ENCODE measurements at regions of chr12 and their contacts with region 1.

Region 1: GRCh38 chr12:31603546-31604009 is 12.6 kb upstream of the DENND5B start:
- DNase-seq: no peak
- ATAC-seq: no peak
- H3K4me3 ChIP-seq: no peak overlapping the region
- H3K27ac ChIP-seq: no peak overlapping the region
- H3K4me1 ChIP-seq: peaks cover 0 to 6% of the 10 kb centered on the region in 2 donors
- H3K27me3 ChIP-seq: no peaks in the 10 kb centered on the region

Region 2: GRCh38 chr12:31578632-31579031 is 24.9 kb before region 1 on chr12:
- intact Hi-C with region 1: no loop called
- DNase-seq: no peak
- ATAC-seq: no peak
- H3K4me3 ChIP-seq: no peak overlapping the region
- H3K27ac ChIP-seq: no peak overlapping the region
- H3K4me1 ChIP-seq: peaks cover 0 to 6% of the 10 kb centered on the region in 2 donors
- H3K27me3 ChIP-seq: no peaks in the 10 kb centered on the region

Region 3: DNA sequence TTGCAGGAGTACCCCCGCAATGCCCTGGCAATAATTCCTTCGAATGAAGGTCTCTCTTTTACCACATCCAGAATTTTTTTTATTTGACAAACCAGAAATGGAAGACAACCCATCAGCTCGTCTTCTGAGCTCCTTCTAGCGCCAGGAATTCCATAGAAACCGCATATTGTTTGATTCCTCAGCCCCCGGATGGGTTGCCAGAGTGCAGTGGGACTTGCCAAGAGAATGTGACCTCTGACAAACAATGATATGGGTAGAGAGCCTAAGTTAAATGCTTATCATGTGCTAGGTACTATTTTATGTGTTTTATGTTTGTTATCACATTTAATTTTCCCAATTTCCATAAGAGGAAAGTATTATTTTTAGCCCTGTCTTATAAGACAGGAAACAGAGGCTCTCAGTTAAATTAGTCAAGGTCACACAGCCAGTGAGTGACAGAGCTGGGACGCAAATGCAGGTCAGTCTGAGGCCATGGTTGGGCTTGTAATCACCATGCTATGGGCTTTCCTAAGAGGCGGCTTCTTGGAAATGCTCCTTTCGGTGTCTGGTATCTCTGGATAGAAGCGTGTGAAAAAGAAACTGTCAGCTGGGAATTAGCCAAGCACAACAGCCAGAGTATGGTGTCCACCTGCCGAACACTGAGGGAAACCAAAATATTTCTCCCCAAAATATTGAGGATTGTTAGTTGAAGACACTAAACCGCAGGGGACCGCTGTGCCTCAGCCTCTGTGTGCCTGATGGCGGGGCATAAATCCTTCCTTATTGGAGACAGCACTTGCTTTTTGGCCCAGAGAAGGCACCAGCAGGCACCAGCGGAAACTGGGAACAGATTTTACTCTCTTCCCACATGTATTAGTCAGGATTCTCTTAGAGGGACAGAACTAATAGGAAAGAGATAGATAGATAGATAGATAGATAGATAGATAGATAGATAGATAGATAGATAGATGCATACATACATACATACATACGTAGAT is 26.5 kb after region 1 on chr12:
- intact Hi-C with region 1: loop called in 1 of 2 experiments (anchors 2 kb)
- DNase-seq: peak in 1 of 2 donors; percentile 57
- ATAC-seq: peak; percentile 53
- H3K4me3 ChIP-seq: no peak overlapping the region
- H3K27ac ChIP-seq: no peak overlapping the region
- H3K4me1 ChIP-seq: no peaks in the 10 kb centered on the region
- H3K27me3 ChIP-seq: no peaks in the 10 kb centered on the region